ENCODE measurements at regions of chr3 and their contacts with region 1.

Region 1: DNA sequence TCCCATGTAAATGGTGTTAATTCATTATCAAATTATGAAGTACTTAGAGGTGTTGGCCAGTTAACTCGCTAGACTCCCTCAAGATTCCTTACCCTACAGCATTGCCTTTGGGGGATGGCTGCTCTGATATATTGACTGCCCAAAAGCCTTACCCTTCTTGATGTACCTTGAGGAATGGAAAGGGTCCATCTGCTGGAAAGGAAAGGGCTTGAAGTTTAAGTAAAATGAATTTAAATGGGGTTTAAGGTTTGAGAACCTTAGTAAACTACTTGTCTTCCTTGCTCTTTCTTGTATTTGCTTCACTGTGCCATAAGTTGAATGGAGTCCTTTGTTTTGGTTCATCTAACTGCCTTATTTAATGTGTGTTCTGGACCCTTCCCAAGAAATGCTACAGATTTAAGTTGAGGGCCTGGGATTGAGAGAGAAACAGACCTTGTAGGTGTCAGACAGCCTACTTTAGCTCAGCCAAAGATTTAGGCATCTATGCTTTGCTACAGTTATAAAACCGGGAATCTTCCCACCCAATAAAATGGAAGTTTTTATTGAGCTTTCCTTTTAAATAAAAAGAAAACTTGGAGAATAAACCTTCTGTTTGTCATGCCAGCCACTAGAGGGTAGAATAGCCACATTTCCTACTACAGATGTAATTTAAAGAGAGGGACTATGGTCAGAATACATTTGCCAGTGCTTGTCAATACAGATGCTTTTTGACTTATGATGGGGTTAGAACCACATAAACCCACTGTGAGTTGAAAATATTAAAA is 25.3 kb downstream of the CMSS1 start:
- DNase-seq: no peak
- ATAC-seq: peak; percentile 72 to 80 (median 74)
- H3K4me3 ChIP-seq: peak overlapping the region in 1 of 12 donors; percentile 8
- H3K27ac ChIP-seq: peak overlapping the region; percentile 53 to 83 (median 72)
- H3K4me1 ChIP-seq: peaks cover 12 to 55% (median 47%) of the 10 kb centered on the region in 12 donors
- H3K27me3 ChIP-seq: no peaks in the 10 kb centered on the region
- CTCF ChIP-seq: peak; percentile 59 to 81 (median 72)
- POLR2A ChIP-seq: no peak

Region 2: GRCh38 chr3:99753268-99753975 is 89.6 kb before region 1 on chr3:
- intact Hi-C with region 1: no loop called
- DNase-seq: peak in 2 of 5 donors; percentile 15 to 27
- ATAC-seq: peak; percentile 69 to 86 (median 77)
- H3K4me3 ChIP-seq: no peak overlapping the region
- H3K27ac ChIP-seq: no peak overlapping the region
- H3K4me1 ChIP-seq: peaks cover 0 to 20% (median 1%) of the 10 kb centered on the region in 12 donors
- H3K27me3 ChIP-seq: no peaks in the 10 kb centered on the region
- CTCF ChIP-seq: peak; percentile 57 to 82 (median 71)
- POLR2A ChIP-seq: no peak

Region 3: DNA sequence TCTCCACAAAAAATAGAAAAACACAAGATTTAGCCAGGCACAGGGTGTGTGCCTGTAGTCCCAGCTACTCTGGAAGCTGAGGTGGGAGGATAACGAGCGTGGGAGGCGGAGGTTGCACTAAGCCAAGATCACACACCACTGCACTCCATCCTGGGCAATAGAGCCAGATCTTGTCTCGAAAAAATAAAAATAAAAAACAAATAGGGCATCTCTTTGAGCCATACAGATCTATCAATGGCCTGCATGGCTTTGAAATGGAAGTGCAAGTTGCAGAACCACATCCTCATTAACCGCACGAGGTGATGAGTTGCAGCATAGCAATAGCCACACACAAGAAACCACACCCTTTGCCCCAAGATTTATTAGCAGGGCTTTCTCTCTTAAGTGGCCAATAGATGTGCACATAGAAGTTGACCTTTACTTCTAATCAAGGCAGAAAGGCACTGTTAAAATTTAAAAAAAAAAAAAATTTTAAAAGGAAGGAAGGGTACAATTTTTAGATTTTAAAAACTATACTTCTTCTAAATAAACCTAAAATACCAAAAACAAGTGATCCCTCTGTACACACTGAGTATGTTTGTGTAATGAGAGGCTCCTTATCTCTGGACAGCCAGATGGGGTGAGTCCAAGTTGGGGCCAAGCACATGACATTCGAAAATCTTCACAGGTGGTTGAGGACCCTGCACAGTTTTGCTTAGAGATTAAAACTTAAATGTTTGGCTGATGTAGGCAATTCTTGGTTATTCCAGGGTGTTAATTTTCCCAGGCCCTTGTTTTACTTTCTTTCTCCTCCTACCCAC is 217.9 kb after region 1 on chr3:
- intact Hi-C with region 1: loop called (anchors 5 kb)
- DNase-seq: no peak
- ATAC-seq: peak in 1 of 4 donors; percentile 36
- H3K4me3 ChIP-seq: no peak overlapping the region
- H3K27ac ChIP-seq: peak overlapping the region in 5 of 12 donors; percentile 4 to 32 (median 22)
- H3K4me1 ChIP-seq: peaks cover 0 to 33% (median 9%) of the 10 kb centered on the region in 12 donors
- H3K27me3 ChIP-seq: no peaks in the 10 kb centered on the region
- CTCF ChIP-seq: no peak
- POLR2A ChIP-seq: no peak

Region 4: DNA sequence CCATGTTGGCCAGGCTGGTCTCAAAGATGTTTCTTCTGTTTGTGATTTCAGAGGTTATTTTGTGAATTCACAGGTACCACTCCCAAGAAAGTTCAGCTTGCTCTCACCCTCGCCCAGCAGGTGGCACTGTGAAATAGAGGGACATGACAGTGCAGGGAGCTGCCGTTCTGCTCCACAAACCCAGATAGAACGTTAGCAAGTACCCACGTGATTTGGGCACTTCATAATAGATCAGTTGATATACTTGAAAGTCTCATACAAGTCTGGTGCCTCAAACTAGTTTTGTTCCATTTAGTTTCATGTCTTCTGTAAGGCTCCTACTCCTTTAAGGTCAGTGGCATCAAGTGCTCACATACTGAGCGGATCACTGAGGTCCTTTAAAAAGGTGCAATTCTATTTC is 225.8 kb after region 1 on chr3:
- intact Hi-C with region 1: loop called in 7 of 10 experiments (anchors 5 kb)
- DNase-seq: peak; percentile 80 to 87 (median 81)
- ATAC-seq: peak; percentile 73 to 91 (median 86)
- H3K4me3 ChIP-seq: no peak overlapping the region
- H3K27ac ChIP-seq: peak overlapping the region in 4 of 12 donors; percentile 14 to 60 (median 24)
- H3K4me1 ChIP-seq: peaks cover 0 to 42% (median 23%) of the 10 kb centered on the region in 12 donors
- H3K27me3 ChIP-seq: no peaks in the 10 kb centered on the region
- CTCF ChIP-seq: peak; percentile 49 to 88 (median 76)
- POLR2A ChIP-seq: no peak

Region 5: GRCh38 chr3:100159331-100160153 is 316.5 kb after region 1 on chr3:
- intact Hi-C with region 1: loop called in 2 of 10 experiments (anchors 5 to 10 kb)
- DNase-seq: no peak
- ATAC-seq: peak in 1 of 4 donors; percentile 28
- H3K4me3 ChIP-seq: no peak overlapping the region
- H3K27ac ChIP-seq: peak overlapping the region; percentile 10 to 80 (median 66)
- H3K4me1 ChIP-seq: peaks cover 0 to 63% (median 44%) of the 10 kb centered on the region in 12 donors
- H3K27me3 ChIP-seq: no peaks in the 10 kb centered on the region
- CTCF ChIP-seq: no peak
- POLR2A ChIP-seq: no peak